IMR-90 (cell line): ENCODE measurements at regions of chr18 and their contacts with region 1.

Region 1: DNA sequence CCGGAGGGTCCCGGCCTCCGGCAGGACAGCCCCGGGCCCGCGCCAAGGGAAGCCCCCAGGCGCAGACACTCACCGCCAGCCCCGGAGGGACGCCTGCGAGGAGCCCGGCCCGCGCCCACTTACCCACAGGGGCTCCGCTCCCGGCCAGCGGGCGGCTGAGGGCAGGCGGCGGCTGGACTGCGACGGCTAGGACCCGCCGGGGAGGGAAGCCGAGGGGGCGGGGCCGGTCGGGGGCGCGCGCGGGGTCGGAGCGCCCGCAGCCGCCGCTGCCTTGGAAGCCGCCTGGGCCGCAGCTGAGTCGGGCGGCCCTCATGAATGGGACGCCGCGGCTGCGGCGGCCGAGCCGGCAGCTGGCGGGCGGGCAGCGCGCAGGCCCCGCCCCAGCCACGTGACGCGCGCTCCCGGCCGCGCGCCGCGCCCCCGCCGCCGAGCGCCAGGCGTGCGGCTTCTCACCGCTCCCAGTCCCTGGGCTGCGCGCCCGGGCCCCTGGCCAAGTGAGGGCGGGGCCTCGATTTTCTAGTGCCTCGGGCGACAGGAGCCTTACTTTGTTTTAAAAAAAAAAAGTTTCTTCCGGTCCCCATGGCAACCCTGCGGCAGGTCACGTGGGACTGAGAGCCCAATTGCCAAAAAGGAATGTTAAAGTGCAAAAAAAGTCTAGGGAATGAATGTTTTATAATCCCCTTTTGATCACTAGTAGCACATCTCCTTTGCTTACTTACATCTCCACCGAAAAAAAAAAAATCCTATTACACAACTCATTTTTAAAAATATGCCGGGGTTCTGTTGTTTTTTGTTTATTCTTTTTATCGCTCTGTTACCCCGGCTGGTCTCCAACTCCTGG is at the start of gene LPIN2:
- DNase-seq: peak; percentile 96
- ATAC-seq: peak; percentile 83
- H3K4me3 ChIP-seq: peak within 1 kb of the TSS; percentile 98
- H3K27ac ChIP-seq: peak within 1 kb of the TSS; percentile 96
- H3K4me1 ChIP-seq: peaks cover 20% of the 10 kb centered on the region
- H3K27me3 ChIP-seq: no peaks in the 10 kb centered on the region
- CTCF ChIP-seq: no peak
- POLR2A ChIP-seq: peak; percentile 85
- RAD21 ChIP-seq: no peak
- total RNA-seq, gene LPIN2: 21.9 and 23.9 TPM in 2 replicates

Region 2: GRCh38 chr18:2958819-2959298 is 54.3 kb before region 1 on chr18:
- CTCF ChIA-PET with region 1: no interaction called
- POLR2A ChIA-PET with region 1: no interaction called
- dilution Hi-C with region 1: no loop called
- in situ Hi-C with region 1: no loop called
- intact Hi-C with region 1: loop called (anchors 10 kb)
- DNase-seq: peak; percentile 63
- ATAC-seq: peak; percentile 66
- H3K4me3 ChIP-seq: no peak overlapping the region
- H3K27ac ChIP-seq: peak overlapping the region; percentile 39; the same call in 1 of the 2 replicates
- H3K4me1 ChIP-seq: peaks cover 12% of the 10 kb centered on the region
- H3K27me3 ChIP-seq: no peaks in the 10 kb centered on the region
- CTCF ChIP-seq: no peak
- POLR2A ChIP-seq: no peak
- RAD21 ChIP-seq: no peak

Region 3: GRCh38 chr18:2985628-2986027 is 27.6 kb before region 1 on chr18:
- CTCF ChIA-PET with region 1: no interaction called
- POLR2A ChIA-PET with region 1: no interaction called
- dilution Hi-C with region 1: no loop called
- in situ Hi-C with region 1: no loop called
- intact Hi-C with region 1: loop called (anchors 2 kb)
- DNase-seq: peak; percentile 54
- ATAC-seq: no peak
- H3K4me3 ChIP-seq: no peak overlapping the region
- H3K27ac ChIP-seq: peak overlapping the region; percentile 27; the same call in 1 of the 2 replicates
- H3K4me1 ChIP-seq: peaks cover 30% of the 10 kb centered on the region
- H3K27me3 ChIP-seq: no peaks in the 10 kb centered on the region
- CTCF ChIP-seq: peak; percentile 51
- POLR2A ChIP-seq: no peak
- RAD21 ChIP-seq: peak; percentile 48

Region 4: DNA sequence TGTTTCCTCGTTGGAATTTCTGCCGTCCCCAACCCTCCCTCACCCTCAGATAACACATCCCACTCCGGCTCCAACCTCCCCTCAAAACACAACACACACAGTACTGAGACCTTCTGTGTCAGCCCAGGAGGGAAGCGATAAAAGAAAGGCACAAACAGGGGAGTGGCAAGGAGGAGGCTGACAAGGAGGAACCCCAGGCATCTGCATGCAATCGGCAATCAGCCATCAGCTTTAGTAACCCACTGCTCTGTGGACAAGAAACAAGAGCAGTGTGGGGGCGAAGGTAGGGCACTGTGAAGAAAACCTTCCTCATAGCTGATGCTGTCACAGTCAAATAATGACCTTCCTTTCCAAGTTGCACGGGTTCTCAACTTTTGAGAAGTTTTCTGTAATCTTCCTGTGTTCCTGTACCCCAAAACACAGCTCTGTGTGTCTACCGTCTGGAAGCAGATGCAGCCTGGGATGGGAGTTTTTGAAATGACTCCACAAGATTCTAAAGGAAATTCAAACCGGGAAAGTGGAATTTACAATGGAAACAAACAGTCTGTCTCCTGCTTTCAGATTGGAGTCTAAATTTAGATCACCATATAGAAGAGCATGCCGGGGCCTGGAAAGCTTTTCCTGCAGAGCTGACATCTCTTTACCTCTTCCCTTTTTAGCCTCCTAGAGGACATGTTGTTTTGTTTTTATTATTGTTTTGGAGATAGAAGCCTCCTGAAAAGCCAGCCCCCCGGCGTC is 16.2 kb after region 1 on chr18:
- CTCF ChIA-PET with region 1: interaction called, 3 read pairs
- POLR2A ChIA-PET with region 1: no interaction called
- dilution Hi-C with region 1: no loop called
- in situ Hi-C with region 1: no loop called
- intact Hi-C with region 1: loop called (anchors 2 kb)
- DNase-seq: peak; percentile 67
- ATAC-seq: peak; percentile 87
- H3K4me3 ChIP-seq: no peak overlapping the region; the same call in 1 of the 2 replicates
- H3K27ac ChIP-seq: peak overlapping the region; percentile 39
- H3K4me1 ChIP-seq: peaks cover 8% of the 10 kb centered on the region
- H3K27me3 ChIP-seq: no peaks in the 10 kb centered on the region
- CTCF ChIP-seq: no peak
- POLR2A ChIP-seq: no peak
- RAD21 ChIP-seq: no peak

Region 5: GRCh38 chr18:3062798-3063680 is 49.9 kb after region 1 on chr18:
- CTCF ChIA-PET with region 1: interaction called, 4 read pairs
- POLR2A ChIA-PET with region 1: no interaction called
- dilution Hi-C with region 1: no loop called
- in situ Hi-C with region 1: no loop called
- intact Hi-C with region 1: loop called (anchors 2 kb)
- DNase-seq: peak; percentile 15
- ATAC-seq: peak; percentile 70
- H3K4me3 ChIP-seq: no peak overlapping the region
- H3K27ac ChIP-seq: no peak overlapping the region
- H3K4me1 ChIP-seq: peaks cover 7% of the 10 kb centered on the region; the same call in 1 of the 2 replicates
- H3K27me3 ChIP-seq: no peaks in the 10 kb centered on the region
- CTCF ChIP-seq: peak; percentile 53
- POLR2A ChIP-seq: no peak
- RAD21 ChIP-seq: peak; percentile 46

Region 6: DNA sequence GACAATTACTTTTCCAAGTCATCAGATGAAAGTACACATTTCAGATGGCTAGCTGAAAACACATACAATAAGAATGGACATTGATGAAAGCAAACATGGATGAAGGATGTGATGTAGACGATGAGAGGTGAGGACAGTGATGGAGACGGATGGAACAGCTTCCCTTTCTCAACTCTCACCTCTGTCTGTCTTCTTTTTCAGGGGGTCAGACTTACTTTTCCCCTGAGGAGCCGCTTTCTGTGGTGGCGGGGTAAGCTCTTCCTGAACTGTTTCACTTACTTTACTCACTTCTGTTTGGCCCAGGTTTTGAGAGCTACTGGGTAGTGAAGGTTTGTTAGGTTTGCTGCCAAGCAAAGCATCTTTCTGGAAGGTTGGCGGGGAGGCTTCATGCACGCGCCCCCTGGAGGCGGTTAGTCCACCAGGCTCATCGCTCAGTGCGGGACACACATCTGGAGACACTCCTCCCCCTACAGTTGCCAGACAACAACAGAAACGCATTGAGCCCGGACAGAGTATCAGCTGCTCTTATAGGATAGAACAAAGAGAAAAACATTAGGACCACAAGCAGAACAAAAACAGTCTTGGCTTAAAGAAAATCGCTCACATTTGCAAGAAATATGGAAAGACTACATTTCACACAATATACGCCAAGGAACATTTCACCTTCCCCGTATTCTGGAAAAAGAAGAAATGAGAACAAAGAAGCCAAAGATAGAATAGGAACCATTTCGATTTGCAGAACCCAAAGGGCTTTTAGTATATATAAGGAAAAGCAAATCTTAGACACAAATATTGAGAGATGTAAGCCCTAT is 116.1 kb after region 1 on chr18:
- CTCF ChIA-PET with region 1: no interaction called
- POLR2A ChIA-PET with region 1: no interaction called
- dilution Hi-C with region 1: no loop called
- in situ Hi-C with region 1: no loop called
- intact Hi-C with region 1: loop called (anchors 2 kb)
- DNase-seq: peak; percentile 78
- ATAC-seq: peak; percentile 100
- H3K4me3 ChIP-seq: no peak overlapping the region
- H3K27ac ChIP-seq: no peak overlapping the region
- H3K4me1 ChIP-seq: no peaks in the 10 kb centered on the region
- H3K27me3 ChIP-seq: no peaks in the 10 kb centered on the region; the same call in 1 of the 2 replicates
- CTCF ChIP-seq: peak; percentile 83
- POLR2A ChIP-seq: no peak
- RAD21 ChIP-seq: peak; percentile 68

Region 7: DNA sequence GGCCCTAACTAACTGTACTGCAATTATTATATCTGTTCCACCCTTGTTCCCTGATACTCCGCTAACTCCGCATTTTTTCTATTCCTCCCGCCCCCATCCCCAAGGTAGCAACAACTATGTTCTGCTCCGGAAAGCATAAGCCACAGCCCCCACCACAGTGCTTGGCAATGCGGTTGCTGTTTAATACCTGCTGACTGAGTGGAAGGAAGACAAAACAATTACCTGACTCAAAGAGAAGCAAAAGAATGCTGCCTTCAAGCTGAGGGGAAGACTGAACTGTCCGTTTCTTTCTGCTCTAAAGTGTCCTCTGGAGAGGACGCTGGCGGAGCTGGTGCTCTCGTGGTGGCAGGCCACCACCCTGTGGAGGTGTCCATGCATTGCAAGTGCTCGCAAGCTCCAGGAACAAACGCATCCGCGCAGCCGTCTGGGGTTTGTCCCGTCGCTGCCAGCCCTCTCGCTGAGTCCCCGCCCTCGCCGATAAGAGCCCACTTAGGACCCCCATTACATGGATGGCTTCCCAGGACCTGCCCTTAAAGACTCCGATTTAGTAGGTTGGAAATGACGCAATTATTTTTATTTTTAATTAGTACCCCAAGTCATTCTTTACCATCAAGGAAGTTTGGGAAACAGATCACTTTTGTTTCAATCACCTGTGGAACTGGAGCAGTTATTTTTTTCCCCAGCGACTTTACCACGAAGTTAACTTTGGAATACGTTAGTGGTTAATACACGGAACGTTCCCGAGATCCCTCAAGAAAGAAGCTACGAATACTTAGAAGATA is 232.9 kb after region 1 on chr18:
- CTCF ChIA-PET with region 1: interaction called, 3 read pairs
- POLR2A ChIA-PET with region 1: no interaction called
- dilution Hi-C with region 1: no loop called
- in situ Hi-C with region 1: no loop called
- intact Hi-C with region 1: loop called (anchors 2 kb)
- DNase-seq: peak; percentile 82
- ATAC-seq: peak; percentile 59
- H3K4me3 ChIP-seq: no peak overlapping the region
- H3K27ac ChIP-seq: peak overlapping the region; percentile 97; the same call in 1 of the 2 replicates
- H3K4me1 ChIP-seq: peaks cover 6% of the 10 kb centered on the region; the same call in 1 of the 2 replicates
- H3K27me3 ChIP-seq: no peaks in the 10 kb centered on the region
- CTCF ChIP-seq: peak; percentile 89
- POLR2A ChIP-seq: peak; percentile 45; the same call in 1 of the 2 replicates
- RAD21 ChIP-seq: peak; percentile 95